ENCODE measurements at regions of chr2 and their contacts with region 1.

Region 1: GRCh38 chr2:206263959-206264603 is 10.4 kb upstream of the ZDBF2 start:
- DNase-seq: no peak
- ATAC-seq: no peak
- H3K4me3 ChIP-seq: peak overlapping the region in 1 of 2 donors; percentile 2
- H3K4me3 Mint-ChIP-seq: peak overlapping the region in 1 of 3 donors; percentile 57
- H3K27ac ChIP-seq: no peak overlapping the region
- H3K27ac Mint-ChIP-seq: no peak overlapping the region
- H3K4me1 ChIP-seq: peaks cover 0 to 2% of the 10 kb centered on the region in 2 experiments
- H3K4me1 Mint-ChIP-seq: peaks cover 0 to 11% (median 7%) of the 10 kb centered on the region in 3 donors
- H3K27me3 ChIP-seq: peaks cover 38 to 54% of the 10 kb centered on the region in 2 experiments
- H3K27me3 Mint-ChIP-seq: peaks cover 65 to 79% of the 10 kb centered on the region in 2 donors

Region 2: DNA sequence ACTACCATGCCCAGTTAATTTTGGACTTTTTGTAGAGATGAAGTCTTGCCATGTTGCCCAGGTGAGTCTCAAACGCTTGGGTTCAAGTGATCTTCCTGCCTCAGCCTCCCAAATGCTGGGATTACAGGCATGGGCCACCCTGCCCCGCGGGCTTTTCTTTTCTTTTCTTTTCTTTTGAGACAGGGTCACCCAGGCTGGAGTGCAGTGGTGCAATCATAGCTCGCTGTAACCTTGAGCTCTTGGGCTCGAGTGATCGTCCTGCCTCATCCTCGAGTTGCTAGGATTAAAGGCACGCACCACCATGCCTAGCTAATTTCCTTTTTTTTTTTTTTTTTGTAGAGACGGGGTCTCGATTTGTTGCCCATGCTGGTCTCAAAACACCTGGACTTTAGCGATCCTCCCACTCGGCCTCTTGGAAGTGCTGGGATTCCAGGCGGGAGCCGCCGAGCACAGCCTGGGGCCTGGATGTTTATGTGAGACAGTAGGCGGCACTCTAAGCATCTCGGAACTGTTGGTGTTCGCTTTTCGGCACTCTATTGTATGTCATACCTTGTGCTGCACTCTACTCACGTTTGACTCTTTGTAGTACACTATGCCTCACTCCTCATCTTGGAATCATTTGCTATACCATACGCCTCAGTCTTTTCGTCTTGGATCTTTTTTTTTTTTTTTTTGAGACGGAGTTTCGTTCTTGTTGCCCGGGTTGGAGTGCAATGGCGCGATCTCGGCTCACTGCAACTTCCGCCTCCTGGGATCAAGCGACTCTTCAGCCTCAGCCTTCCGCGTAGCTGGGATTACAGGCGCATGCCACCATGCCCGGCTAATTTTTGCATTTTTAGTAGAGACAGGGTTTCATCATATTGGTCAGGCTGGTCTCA is 14.1 kb before region 1 on chr2:
- CTCF ChIA-PET with region 1: interaction called in 1 of 2 experiments, 15 read pairs
- POLR2A ChIA-PET with region 1: interaction called in 1 of 2 experiments, 9 read pairs
- DNase-seq: peak in 1 of 35 experiments; percentile 9
- ATAC-seq: peak in 1 of 4 experiments; percentile 50
- H3K4me3 ChIP-seq: peak overlapping the region; percentile 23 to 26
- H3K4me3 Mint-ChIP-seq: peak overlapping the region; percentile 70 to 77 (median 75)
- H3K27ac ChIP-seq: no peak overlapping the region
- H3K27ac Mint-ChIP-seq: no peak overlapping the region
- H3K4me1 ChIP-seq: peaks cover 0 to 11% of the 10 kb centered on the region in 2 experiments
- H3K4me1 Mint-ChIP-seq: peaks cover 10 to 17% (median 11%) of the 10 kb centered on the region in 3 donors
- H3K27me3 ChIP-seq: peaks cover 5 to 23% of the 10 kb centered on the region in 2 experiments
- H3K27me3 Mint-ChIP-seq: peaks cover 48 to 55% of the 10 kb centered on the region in 2 donors